ENCODE measurements at regions of chr21 and their contacts with region 1.

Region 1: DNA sequence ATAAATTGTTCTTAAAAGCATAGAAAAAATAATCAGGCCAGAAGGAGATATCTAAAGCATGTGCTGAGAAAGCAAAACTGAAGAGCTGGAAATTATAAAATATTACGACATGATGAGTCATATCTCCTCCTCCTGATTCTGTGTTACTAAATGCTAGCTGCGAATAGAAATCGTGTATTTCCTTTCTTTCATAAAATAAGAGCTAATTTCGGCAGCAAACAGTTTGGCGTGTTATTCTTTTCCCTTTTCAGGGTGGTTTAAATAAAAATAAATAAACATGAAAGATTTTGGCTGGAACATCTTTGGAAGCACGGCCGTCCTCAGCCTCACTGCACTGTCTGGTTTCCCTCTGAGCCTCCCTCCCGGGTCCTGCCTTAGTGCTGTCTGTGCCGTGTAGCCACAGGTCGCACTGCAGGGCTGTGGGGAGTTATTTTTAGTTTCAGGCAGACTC is 56.0 kb downstream of the ADARB1 start:
- DNase-seq: peak; percentile 72
- H3K4me3 ChIP-seq: peak overlapping the region; percentile 9 to 56 (median 12)
- H3K27ac ChIP-seq: peak overlapping the region; percentile 83
- H3K4me1 ChIP-seq: peaks cover 45% of the 10 kb centered on the region
- H3K27me3 ChIP-seq: no peaks in the 10 kb centered on the region
- CTCF ChIP-seq: no peak
- POLR2A ChIP-seq: no peak

Region 2: DNA sequence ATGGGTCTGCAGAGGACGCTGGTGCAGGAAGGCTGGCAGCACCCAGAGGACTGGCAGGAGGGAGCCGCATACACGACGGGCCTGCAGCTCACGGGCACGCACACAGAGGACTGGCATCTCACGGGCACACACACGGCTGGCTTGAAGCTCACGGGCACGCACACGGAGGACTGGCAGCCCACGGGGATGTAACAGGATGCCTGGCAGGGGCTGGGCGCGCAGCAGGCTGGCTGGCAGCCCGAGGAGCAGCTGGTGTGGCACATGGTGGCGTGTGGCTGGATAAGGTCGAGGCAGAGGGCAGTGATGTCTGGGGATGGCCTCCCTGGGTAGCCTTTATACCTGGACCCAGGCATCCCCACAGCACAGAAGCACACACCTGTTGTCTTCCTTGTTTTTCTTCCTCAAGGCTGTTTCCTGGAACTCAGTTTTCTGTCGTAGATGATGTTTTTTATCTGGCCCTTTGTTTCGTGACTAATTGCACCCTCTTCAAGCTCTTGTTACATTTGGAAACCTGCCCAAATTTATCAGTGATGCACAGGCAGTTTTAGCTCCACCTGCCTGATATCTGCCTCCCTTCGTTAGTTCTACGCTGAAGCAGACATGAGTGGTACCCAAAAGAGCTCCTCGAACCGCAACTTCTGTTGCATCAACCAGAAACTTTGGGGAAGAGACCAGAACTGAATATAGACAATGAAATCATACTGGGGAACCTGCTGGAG is 448.3 kb before region 1 on chr21 and contains the start of gene KRTAP12-1:
- CTCF ChIA-PET with region 1: no interaction called
- POLR2A ChIA-PET with region 1: no interaction called
- dilution Hi-C with region 1: no loop called
- intact Hi-C with region 1: no loop called
- DNase-seq: no peak
- H3K4me3 ChIP-seq: no peak within 1 kb of the TSS
- H3K27ac ChIP-seq: no peak within 1 kb of the TSS
- H3K4me1 ChIP-seq: no peaks in the 10 kb centered on the region
- H3K27me3 ChIP-seq: peaks cover 2 to 10% of the 10 kb centered on the region in 2 experiments
- CTCF ChIP-seq: no peak
- POLR2A ChIP-seq: no peak
- total RNA-seq, gene KRTAP12-1: not detected in 2 replicates

Region 3: DNA sequence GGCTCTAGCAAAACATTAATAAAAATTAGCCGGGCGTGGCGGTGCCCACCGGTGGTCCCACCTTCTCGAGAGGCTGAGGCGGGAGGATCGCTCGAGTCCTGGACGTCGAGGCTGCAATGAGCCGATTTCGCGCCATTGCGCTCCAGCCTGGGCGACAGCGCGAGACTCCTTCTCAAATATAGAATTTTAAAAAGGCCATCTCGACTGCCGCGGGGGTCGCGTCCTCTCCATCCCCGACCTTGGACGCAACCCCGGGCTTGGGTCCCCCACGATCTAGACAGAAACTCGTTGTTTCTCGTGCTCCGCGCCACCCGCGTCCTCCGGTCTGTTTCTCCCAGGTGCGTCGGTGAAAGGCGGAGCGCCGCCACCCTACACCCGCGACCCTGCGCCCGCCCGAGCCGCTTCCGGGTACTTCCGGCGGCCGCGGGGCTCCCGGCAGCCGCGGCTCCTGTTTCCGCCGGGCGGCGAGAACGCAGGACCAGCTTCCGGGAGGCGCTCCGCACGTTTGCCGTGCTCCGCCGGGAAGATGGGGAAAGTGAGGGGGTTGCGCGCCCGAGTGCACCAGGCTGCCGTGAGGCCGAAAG is 190.7 kb before region 1 on chr21 and contains the start of gene SLX9:
- CTCF ChIA-PET with region 1: interaction called, 330 read pairs
- POLR2A ChIA-PET with region 1: no interaction called
- dilution Hi-C with region 1: loop called (anchors 25 kb)
- intact Hi-C with region 1: no loop called
- DNase-seq: peak; percentile 39
- H3K4me3 ChIP-seq: peak within 1 kb of the TSS; percentile 48 to 83 (median 60)
- H3K27ac ChIP-seq: peak within 1 kb of the TSS; percentile 47
- H3K4me1 ChIP-seq: peaks cover 18% of the 10 kb centered on the region
- H3K27me3 ChIP-seq: no peaks in the 10 kb centered on the region
- CTCF ChIP-seq: no peak
- POLR2A ChIP-seq: peak; percentile 81
- total RNA-seq, gene SLX9: 46.4 and 50.6 TPM in 2 replicates

Region 4: GRCh38 chr21:44958471-44959191 is 171.7 kb before region 1 on chr21:
- CTCF ChIA-PET with region 1: interaction called, 219 read pairs
- POLR2A ChIA-PET with region 1: no interaction called
- dilution Hi-C with region 1: no loop called
- intact Hi-C with region 1: loop called (anchors 1 kb)
- DNase-seq: peak; percentile 95
- H3K4me3 ChIP-seq: no peak overlapping the region
- H3K27ac ChIP-seq: peak overlapping the region; percentile 61
- H3K4me1 ChIP-seq: peaks cover 40% of the 10 kb centered on the region
- H3K27me3 ChIP-seq: no peaks in the 10 kb centered on the region
- CTCF ChIP-seq: no peak
- POLR2A ChIP-seq: no peak

Region 5: GRCh38 chr21:44975720-44976555 is 154.4 kb before region 1 on chr21:
- CTCF ChIA-PET with region 1: interaction called, 21 read pairs
- POLR2A ChIA-PET with region 1: no interaction called
- dilution Hi-C with region 1: no loop called
- intact Hi-C with region 1: no loop called
- DNase-seq: no peak
- H3K4me3 ChIP-seq: no peak overlapping the region
- H3K27ac ChIP-seq: no peak overlapping the region
- H3K4me1 ChIP-seq: no peaks in the 10 kb centered on the region
- H3K27me3 ChIP-seq: no peaks in the 10 kb centered on the region
- CTCF ChIP-seq: no peak
- POLR2A ChIP-seq: no peak

Region 6: DNA sequence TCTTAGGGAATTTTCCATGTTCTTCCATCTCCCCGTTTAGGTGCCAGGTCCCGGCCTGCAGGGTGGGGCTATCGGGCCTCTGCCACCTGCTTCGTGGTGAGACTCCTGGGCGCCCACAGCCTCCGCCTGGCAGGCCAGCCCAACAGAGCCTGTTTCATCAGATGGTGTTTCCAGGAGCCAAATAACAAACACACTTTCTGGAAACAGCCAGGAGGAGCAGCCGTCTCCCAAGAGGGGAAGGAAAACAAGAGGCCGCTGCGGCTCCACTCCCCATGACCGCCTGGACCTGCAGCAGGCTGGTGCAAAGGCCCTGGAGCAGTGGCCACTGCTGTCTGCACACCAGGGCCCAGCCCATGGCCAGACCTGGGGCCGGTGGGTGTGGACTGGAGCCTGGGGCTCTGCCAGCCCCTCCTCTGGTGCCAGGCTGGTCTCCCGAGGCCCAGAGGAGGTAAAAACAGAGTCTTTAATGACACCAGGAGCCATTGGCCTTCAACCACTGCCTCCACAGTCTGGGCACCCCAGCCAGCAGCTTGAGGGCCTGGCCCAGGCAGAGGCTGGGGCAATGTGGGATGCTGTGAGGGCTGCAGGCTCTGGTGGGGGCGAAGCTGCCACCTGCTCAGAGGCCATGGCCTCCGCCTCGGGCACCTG is 135.5 kb before region 1 on chr21:
- CTCF ChIA-PET with region 1: interaction called, 15 read pairs
- POLR2A ChIA-PET with region 1: no interaction called
- dilution Hi-C with region 1: no loop called
- intact Hi-C with region 1: no loop called
- DNase-seq: no peak
- H3K4me3 ChIP-seq: no peak overlapping the region
- H3K27ac ChIP-seq: no peak overlapping the region
- H3K4me1 ChIP-seq: no peaks in the 10 kb centered on the region
- H3K27me3 ChIP-seq: no peaks in the 10 kb centered on the region
- CTCF ChIP-seq: no peak
- POLR2A ChIP-seq: no peak

Region 7: DNA sequence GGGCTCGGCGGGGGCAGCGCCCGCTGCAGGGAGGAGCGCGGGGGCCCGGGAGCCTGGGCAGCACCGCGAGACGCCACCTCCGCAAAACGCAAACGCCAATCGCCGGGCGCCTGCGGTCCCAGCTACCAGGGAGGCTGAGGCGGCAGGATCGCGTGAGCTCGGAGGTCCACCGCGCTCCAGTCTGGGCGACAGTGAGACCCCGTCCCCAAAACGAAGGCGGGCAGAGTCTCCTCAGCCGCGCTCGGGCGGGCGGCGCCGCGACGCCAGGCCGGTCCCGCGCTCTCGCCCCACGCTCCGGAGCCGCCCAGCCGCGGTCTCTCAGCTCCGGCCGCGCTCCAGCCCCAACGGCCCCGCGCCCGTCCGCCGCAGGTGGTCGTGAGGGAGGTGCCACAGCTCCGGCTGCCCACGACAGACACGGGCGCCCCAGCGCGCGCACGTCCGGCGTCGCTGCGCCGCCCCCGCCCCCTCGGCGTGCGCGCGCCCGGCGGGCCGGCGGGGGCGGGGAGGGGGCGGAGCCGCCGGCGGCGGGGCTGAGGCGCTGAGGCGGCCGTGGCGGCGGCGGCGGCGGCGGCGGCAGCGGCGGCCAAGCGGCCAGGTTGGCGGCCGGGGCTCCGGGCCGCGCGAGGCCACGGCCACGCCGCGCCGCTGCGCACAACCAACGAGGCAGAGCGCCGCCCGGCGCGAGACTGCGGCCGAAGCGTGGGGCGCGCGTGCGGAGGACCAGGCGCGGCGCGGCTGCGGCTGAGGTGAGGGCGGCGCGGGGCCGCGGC is 56.1 kb before region 1 on chr21 and contains the start of gene ADARB1:
- CTCF ChIA-PET with region 1: interaction called, 67 read pairs
- POLR2A ChIA-PET with region 1: no interaction called
- dilution Hi-C with region 1: no loop called
- intact Hi-C with region 1: loop called (anchors 1 kb)
- DNase-seq: peak; percentile 29
- H3K4me3 ChIP-seq: peak within 1 kb of the TSS; percentile 68 to 81 (median 73)
- H3K27ac ChIP-seq: peak within 1 kb of the TSS; percentile 75
- H3K4me1 ChIP-seq: peaks cover 16% of the 10 kb centered on the region
- H3K27me3 ChIP-seq: no peaks in the 10 kb centered on the region
- CTCF ChIP-seq: no peak
- POLR2A ChIP-seq: peak; percentile 79
- total RNA-seq, gene ADARB1: 54.3 and 55.5 TPM in 2 replicates

Region 8: DNA sequence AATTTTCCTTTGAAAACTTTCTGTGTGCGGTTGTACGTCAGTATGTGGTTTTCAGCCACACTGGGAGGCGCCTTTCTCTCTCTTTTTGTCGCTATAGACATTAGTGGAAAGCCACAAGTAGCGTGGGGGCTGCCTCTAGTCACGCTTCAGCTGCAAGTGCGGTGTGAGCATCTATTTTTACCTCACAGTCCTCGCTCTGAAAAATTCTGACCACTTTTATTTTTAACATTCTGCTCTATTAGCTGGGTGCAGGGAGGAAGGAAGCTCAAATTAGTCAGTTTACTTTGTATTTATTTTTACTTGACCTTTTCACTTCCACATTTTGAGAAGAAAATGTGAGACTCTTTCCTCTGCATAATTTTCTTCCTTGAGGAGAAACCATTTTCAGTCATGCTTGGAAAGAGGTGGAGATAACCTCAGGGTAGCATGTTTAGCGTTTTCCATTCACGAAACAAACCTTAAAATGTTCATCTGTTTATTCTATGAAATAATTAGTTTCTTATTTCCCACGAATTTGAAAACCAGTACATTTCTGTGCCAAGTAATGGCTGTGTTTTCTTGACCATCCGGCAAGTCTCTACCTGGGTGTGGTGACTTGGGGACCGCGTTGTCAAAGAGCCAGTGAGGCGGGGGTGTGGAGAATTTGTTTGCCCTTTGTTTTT is 20.4 kb before region 1 on chr21:
- CTCF ChIA-PET with region 1: interaction called, 269 read pairs
- POLR2A ChIA-PET with region 1: no interaction called
- dilution Hi-C with region 1: no loop called
- intact Hi-C with region 1: no loop called
- DNase-seq: peak; percentile 56
- H3K4me3 ChIP-seq: peak overlapping the region in 2 of 3 experiments; percentile 4 to 43
- H3K27ac ChIP-seq: peak overlapping the region; percentile 85
- H3K4me1 ChIP-seq: peaks cover 31% of the 10 kb centered on the region
- H3K27me3 ChIP-seq: no peaks in the 10 kb centered on the region
- CTCF ChIP-seq: no peak
- POLR2A ChIP-seq: no peak

Region 9: GRCh38 chr21:45357436-45358260 is 227.3 kb after region 1 on chr21:
- CTCF ChIA-PET with region 1: no interaction called
- POLR2A ChIA-PET with region 1: no interaction called
- dilution Hi-C with region 1: no loop called
- intact Hi-C with region 1: no loop called
- DNase-seq: no peak
- H3K4me3 ChIP-seq: no peak overlapping the region
- H3K27ac ChIP-seq: no peak overlapping the region
- H3K4me1 ChIP-seq: peaks cover 5% of the 10 kb centered on the region
- H3K27me3 ChIP-seq: no peaks in the 10 kb centered on the region
- CTCF ChIP-seq: no peak
- POLR2A ChIP-seq: no peak

Region 10: GRCh38 chr21:45948576-45949141 is 818.3 kb after region 1 on chr21:
- CTCF ChIA-PET with region 1: no interaction called
- POLR2A ChIA-PET with region 1: no interaction called
- dilution Hi-C with region 1: no loop called
- intact Hi-C with region 1: no loop called
- DNase-seq: no peak
- H3K4me3 ChIP-seq: no peak overlapping the region
- H3K27ac ChIP-seq: no peak overlapping the region
- H3K4me1 ChIP-seq: no peaks in the 10 kb centered on the region
- H3K27me3 ChIP-seq: peaks cover 3 to 5% of the 10 kb centered on the region in 2 experiments
- CTCF ChIP-seq: no peak
- POLR2A ChIP-seq: no peak

Measured in endothelial cell of umbilical vein (primary cell).